GM13976 (cell line): ENCODE measurements at regions of chr15 and their contacts with region 1.

Region 1: GRCh38 chr15:66841953-66842681 is 140.1 kb downstream of the SMAD6 start:
- DNase-seq: no peak
- CTCF ChIP-seq: no peak

Region 2: DNA sequence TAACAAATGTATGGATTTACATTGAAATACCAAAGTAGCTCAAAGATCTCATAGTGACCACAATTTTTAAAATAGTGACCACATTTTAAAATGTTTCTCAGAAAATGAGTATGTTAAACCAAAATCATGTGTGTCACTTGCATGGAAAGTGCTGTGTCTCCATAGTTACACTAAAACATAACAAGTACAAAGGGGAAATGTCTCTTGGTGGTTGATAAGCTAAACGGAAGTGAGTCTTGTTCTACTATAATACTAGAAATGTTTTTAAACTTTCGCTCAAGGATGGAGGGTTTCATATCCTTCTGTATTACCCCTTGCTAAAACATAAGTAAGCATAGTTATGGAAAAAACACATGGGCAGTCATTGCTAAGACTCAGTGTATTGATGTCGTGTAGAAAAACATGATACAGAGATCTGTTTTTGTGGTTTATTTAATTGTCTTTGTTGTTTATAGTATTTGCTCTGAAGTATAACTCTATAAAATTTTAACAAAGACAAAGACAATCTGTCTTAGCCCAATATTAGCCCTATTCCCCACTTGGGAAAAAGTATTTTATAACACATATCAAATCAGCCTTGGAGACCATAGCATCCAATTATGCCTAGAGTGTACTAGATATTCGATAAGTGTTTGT is 1023.1 kb before region 1 on chr15:
- in situ Hi-C with region 1: no loop called
- DNase-seq: peak; percentile 75
- CTCF ChIP-seq: no peak

Region 3: GRCh38 chr15:66603301-66604179 is 238.6 kb before region 1 on chr15:
- in situ Hi-C with region 1: loop called (anchors 10 kb)
- DNase-seq: peak; percentile 81
- CTCF ChIP-seq: peak; percentile 59

Region 4: DNA sequence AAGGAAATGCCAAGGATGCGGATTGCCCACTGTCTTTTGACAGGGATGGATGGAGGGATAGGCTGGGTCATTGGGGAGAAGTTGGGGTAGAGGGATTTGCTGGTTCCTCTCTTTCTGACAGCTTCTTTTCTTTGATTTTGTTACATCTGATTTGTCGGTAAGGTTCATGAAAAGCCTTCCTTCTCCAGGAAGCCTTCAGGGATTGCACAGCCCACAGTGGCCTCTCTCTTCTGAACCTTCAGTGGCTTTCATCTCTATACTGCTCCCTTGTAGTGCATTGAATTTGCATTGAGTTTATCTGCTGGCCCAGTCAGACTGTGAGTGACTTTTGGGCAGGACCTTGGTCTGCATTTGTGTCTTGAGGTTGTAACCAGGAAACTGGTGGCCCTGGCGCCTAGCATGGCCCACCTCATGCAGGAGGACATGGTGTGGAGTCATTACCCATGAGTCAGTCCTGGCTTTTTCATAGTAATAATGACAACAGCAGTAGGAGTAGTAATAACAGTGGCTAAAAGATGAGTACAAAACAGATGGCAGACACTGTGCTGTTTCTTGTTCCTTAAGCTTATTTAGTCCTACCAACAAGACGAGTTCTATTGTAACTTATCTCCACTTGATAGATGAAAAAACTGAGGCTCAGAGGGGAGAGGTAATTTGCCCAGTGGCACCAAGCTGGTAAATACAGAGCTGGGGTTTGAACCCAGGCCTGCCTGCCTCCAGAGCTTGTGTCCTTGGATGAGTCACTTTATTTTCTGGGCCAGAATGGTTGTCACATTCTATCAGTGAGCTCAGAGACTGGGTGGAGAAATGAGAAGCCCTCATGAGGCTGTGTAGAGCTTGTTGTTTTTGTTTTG is 111.7 kb before region 1 on chr15:
- in situ Hi-C with region 1: no loop called
- DNase-seq: no peak
- CTCF ChIP-seq: no peak

Region 5: DNA sequence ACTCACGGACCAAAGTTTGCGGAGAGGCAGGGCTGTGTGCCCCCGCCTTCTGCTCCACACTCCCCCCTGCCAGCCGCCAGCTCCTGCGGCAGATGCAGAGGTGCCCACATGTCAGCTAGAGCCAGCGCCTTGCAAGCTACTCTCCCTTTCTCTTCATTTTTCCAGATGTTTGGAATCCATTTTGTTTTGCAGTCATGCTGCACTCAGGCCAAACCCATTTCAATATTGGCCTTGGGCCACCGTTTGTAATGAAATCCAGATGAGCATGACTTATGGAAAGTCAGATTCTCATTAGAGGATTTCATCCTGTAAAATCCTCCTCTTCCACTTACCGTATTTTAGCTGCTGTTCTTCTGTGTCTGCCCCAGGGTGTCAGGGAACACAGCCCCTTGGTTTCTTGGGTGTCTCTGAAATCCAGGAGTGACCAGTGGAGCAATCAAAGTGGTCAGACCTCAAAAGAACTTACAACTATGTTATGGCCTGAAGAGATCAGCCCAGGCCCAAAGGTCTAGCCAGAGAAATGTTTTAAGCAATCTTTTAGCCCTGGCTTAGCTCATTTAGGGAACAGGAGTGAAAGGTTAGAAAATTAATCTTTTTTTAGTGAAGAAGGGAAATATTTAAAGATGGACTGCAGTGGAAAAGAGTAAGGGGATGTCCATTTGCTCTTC is 346.6 kb after region 1 on chr15:
- in situ Hi-C with region 1: no loop called
- DNase-seq: peak; percentile 13
- CTCF ChIP-seq: no peak